Ascending aorta (tissue), 2 donors: ENCODE measurements at regions of chr2 and their contacts with region 1.

Region 1: DNA sequence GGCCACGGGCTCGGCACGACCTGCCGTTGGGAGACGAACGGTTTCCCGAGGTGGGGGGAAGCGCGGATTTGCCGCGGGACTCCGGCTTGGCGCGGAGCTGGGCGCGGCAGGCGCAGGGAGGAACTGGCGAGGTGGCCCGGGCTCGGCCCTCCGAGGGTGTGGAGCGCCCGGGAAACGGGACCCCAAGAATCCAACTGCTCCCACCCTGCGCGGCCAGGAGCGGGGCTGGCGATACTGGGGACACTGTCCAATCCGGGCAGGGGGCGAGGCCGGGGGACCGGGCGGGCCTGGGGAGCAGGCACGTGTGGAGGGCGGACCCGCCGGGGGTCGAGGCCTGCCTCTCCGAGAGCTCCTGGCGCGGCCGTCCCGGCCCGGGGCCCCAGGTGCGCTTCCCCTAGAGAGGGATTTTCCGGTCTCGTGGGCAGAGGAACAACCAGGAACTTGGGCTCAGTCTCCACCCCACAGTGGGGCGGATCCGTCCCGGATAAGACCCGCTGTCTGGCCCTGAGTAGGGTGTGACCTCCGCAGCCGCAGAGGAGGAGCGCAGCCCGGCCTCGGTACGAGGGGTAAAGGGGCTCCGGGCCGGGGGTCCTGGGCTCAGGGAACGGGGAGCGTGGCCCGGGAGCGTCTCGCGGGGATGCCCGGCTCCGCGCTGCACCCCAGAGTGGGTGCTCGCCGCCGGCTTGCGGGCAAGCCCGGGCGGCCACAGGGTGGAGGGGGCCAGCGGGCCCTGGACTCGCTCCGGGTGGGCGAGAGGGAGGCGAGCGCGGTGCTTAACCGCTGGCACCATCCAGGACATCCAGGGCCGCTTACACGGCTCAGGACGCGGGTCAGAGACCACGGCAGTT is at the start of gene ANXA4:
- DNase-seq: peak; percentile 55 to 90
- H3K4me3 ChIP-seq: peak within 1 kb of the TSS; percentile 94 to 99
- H3K27ac ChIP-seq: peak within 1 kb of the TSS; percentile 92 to 97
- H3K4me1 ChIP-seq: peaks cover 0 to 16% of the 10 kb centered on the region in 2 donors
- H3K27me3 ChIP-seq: no peaks in the 10 kb centered on the region
- CTCF ChIP-seq: peak in 1 of 3 experiments; percentile 25
- total RNA-seq, gene ANXA4: 29.1 TPM

Region 2: DNA sequence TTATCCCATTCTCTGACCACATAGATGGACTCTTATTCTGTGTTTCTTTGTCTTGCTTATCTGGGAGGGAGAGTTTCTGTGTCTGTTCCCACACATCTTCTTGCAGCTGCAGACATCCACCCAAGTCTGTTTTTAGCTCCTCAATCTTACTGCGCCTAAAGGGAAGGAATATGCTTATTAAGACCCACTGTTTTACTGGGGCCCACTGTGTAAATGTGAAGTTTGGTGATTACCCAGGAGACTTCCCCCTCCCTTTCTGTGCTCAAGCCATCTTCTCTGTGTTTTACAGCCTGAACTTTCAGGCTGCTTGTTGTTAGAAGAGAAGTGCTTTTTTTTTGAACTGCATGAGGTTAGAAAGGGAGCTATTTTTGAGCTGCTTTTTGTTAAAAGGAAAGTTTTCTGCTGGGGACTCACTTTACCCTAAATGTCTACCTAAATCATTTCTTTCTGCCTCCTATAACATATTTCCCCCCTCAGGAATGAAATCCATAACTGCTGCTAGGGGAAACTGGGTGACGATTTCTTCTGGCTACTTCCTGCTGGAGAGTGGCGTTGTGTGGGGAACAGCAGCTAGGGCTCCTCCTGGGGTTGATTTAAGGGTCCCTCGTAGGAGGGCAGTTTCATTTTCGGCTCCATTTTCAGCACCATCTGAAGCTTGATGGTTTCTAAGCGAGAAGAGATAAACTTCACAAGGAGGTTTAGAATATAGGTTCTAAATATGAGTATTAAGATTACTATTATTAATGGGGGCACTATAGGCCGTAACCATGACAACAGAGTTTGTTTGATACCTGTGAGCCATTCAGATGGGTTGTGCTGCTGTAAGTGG is 48.1 kb after region 1 on chr2:
- intact Hi-C with region 1: loop called (anchors 2 kb)
- DNase-seq: no peak
- H3K4me3 ChIP-seq: peak overlapping the region in 1 of 2 donors; percentile 40
- H3K27ac ChIP-seq: peak overlapping the region; percentile 85 to 88
- H3K4me1 ChIP-seq: peaks cover 4 to 14% of the 10 kb centered on the region in 2 donors
- H3K27me3 ChIP-seq: no peaks in the 10 kb centered on the region
- CTCF ChIP-seq: no peak

Region 3: DNA sequence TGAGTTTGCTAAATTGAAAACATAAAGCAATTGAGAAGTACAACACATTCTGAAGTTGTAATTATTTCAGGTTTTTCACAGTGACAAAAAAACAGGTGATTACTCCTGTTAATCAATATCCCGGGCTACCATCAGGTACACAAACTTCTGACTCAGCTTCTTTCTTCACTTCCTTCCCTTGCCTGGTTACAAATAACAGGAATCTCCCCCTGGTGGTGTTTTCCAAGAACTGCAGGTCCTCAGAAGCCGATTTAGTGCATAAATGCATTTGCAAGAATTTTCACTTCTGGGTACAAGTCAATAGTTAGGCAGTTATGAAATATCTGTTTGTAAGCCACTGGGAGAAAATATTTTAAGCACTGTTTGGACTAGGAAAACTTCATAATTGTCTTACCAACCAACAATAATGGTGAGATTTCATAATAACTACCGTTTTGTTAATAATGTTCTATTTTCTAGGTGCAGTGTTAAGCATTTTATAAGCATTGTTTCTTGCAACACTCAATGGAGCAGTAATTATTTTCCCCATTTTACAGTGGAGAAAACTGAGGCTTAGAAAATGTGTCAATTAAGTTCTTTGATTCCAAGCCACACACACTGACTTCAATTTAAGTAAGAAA is 75.2 kb after region 1 on chr2:
- intact Hi-C with region 1: loop called (anchors 5 kb)
- DNase-seq: peak in 1 of 2 donors; percentile 92
- H3K4me3 ChIP-seq: no peak overlapping the region
- H3K27ac ChIP-seq: no peak overlapping the region
- H3K4me1 ChIP-seq: peaks cover 0 to 3% of the 10 kb centered on the region in 2 donors
- H3K27me3 ChIP-seq: no peaks in the 10 kb centered on the region
- CTCF ChIP-seq: peak; percentile 89 to 93 (median 92)